ENCODE measurements at regions of chr7 and their contacts with region 1.

Region 1: GRCh38 chr7:80732630-80733029 is 94.2 kb downstream of the CD36 start:
- DNase-seq: no peak
- ATAC-seq: no peak
- H3K4me3 Mint-ChIP-seq: no peak overlapping the region
- H3K27ac Mint-ChIP-seq: no peak overlapping the region
- H3K4me1 Mint-ChIP-seq: peaks cover 23% of the 10 kb centered on the region
- H3K27me3 Mint-ChIP-seq: peaks cover 4% of the 10 kb centered on the region
- CTCF ChIP-seq: peak; percentile 41; the same call in 1 of the 2 replicates

Region 2: GRCh38 chr7:80763289-80763688 is 30.7 kb after region 1 on chr7:
- CTCF ChIA-PET with region 1: no interaction called
- POLR2A ChIA-PET with region 1: interaction called, 11 read pairs
- DNase-seq: no peak
- ATAC-seq: no peak
- H3K4me3 Mint-ChIP-seq: no peak overlapping the region
- H3K27ac Mint-ChIP-seq: no peak overlapping the region
- H3K4me1 Mint-ChIP-seq: peaks cover 61% of the 10 kb centered on the region
- H3K27me3 Mint-ChIP-seq: peaks cover 42% of the 10 kb centered on the region
- CTCF ChIP-seq: no peak

Region 3: GRCh38 chr7:81079746-81080145 is 347.1 kb after region 1 on chr7:
- CTCF ChIA-PET with region 1: no interaction called
- POLR2A ChIA-PET with region 1: no interaction called
- DNase-seq: no peak
- ATAC-seq: no peak
- H3K4me3 Mint-ChIP-seq: no peak overlapping the region
- H3K27ac Mint-ChIP-seq: no peak overlapping the region
- H3K4me1 Mint-ChIP-seq: no peaks in the 10 kb centered on the region
- H3K27me3 Mint-ChIP-seq: no peaks in the 10 kb centered on the region; the same call in 1 of the 2 replicates
- CTCF ChIP-seq: no peak

Measured in WTC11 (cell line).